WTC11 (cell line): ENCODE measurements at regions of chr15 and their contacts with region 1.

Region 1: GRCh38 chr15:42591238-42591934 is 16.0 kb downstream of the STARD9 start:
- DNase-seq: no peak
- ATAC-seq: peak; percentile 84
- H3K4me3 Mint-ChIP-seq: no peak overlapping the region
- H3K27ac Mint-ChIP-seq: peak overlapping the region; percentile 57; the same call in 1 of the 2 replicates
- H3K4me1 Mint-ChIP-seq: peaks cover 13% of the 10 kb centered on the region
- H3K27me3 Mint-ChIP-seq: no peaks in the 10 kb centered on the region
- CTCF ChIP-seq: no peak

Region 2: DNA sequence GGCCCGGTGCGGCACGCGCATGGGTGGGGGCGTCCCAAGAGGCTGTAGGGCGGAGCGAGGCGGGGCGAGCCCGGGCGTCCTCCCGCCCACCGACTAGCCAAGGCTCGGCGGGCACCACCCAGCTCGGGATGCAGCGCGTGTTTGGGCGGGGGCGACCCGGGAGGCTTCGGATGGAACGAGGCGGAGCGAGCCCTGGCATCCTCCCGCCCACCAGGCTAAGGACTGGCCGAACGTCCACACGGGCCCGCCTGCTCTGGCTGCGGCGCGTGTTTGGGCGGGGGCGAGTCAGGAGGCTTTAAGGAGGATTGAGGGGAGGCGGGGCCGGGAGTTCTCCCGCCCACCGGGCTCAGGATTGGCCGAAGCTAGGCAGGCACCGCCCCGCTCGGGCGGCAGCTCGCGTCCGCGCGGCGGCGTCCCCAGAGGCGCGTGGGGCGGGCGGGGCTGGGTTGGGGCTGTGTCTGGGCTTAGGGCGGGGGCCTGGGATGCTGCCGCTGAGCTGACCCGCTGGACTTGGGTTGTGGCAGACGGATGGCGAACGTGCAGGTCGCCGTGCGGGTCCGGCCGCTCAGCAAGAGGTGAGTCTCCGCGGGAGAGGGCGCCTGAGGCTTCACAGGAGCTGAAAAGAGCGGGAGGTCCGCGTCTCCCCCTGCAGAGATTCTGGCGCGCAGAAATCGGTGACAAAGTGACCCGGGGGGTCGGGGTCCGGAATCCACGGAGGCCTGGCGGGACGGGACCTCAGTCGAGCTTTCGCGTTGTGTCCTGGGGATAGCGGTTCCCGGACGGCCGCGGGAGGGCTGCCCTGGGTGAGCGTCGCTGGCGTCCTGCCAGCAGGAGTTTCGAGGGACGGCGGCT is 16.0 kb before region 1 on chr15 and contains the start of gene STARD9:
- CTCF ChIA-PET with region 1: interaction called, 28 read pairs
- POLR2A ChIA-PET with region 1: no interaction called
- DNase-seq: peak; percentile 99
- ATAC-seq: peak; percentile 97
- H3K4me3 Mint-ChIP-seq: peak within 1 kb of the TSS; percentile 90
- H3K27ac Mint-ChIP-seq: peak within 1 kb of the TSS; percentile 15
- H3K4me1 Mint-ChIP-seq: peaks cover 12% of the 10 kb centered on the region
- H3K27me3 Mint-ChIP-seq: peaks cover 65% of the 10 kb centered on the region
- CTCF ChIP-seq: no peak
- total RNA-seq, gene STARD9: 5.7 to 6.6 TPM (median 6.2 TPM) in 3 replicates

Region 3: DNA sequence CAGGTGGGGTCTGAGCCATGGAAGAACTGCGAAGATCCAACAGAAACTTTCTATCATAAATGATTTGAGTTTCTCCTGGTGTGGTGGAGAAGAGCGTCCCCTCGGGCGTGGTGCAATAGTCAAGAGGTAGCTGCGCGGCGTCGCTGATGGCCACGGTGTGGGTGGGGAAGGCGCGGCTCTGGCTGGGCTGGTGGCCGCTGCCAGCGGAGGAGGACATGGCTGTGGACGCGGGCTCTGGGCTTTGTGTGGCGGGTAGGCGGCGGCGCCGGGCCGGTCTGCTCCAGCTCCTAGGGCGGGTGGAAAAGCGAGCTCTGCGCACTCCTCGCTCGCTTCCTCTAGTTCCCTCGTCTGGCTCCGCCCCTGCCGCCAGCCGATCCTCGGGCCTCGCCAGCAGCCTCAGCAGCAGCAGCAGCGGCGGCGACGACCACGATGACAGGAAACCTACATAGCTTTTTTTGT is 10.1 kb before region 1 on chr15:
- CTCF ChIA-PET with region 1: interaction called, 28 read pairs
- POLR2A ChIA-PET with region 1: interaction called, 3 read pairs
- DNase-seq: peak; percentile 89
- ATAC-seq: peak; percentile 97
- H3K4me3 Mint-ChIP-seq: peak overlapping the region; percentile 72
- H3K27ac Mint-ChIP-seq: peak overlapping the region; percentile 16
- H3K4me1 Mint-ChIP-seq: peaks cover 37% of the 10 kb centered on the region
- H3K27me3 Mint-ChIP-seq: peaks cover 71% of the 10 kb centered on the region
- CTCF ChIP-seq: no peak

Region 4: GRCh38 chr15:42619656-42620371 is 28.4 kb after region 1 on chr15:
- CTCF ChIA-PET with region 1: interaction called, 16 read pairs
- POLR2A ChIA-PET with region 1: no interaction called
- DNase-seq: peak; percentile 77
- ATAC-seq: peak; percentile 91
- H3K4me3 Mint-ChIP-seq: peak overlapping the region; percentile 22
- H3K27ac Mint-ChIP-seq: peak overlapping the region; percentile 91
- H3K4me1 Mint-ChIP-seq: peaks cover 26% of the 10 kb centered on the region
- H3K27me3 Mint-ChIP-seq: no peaks in the 10 kb centered on the region
- CTCF ChIP-seq: no peak